ENCODE measurements at regions of chr9 and their contacts with region 1.

Region 1: DNA sequence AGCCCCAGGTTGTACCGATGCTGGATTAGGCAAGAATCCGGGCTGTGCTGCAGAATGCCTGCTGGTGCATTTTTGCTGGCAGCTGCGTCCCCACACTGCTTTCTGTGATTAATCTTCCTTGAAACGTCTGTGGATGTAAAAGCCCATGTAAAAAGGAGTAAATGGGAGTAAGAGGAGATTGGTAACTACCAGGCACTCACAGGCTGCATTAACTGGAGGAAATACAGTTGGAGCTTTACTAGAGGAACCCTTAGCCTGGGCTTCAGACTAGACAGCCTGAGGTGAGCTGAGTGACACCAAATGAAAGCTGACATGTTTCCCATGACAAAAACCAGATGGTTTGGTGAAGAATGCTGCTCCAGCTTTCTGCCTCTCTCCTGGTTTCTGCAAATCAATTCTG is 190.4 kb upstream of the GAS1 start:
- DNase-seq: no peak
- H3K4me3 Mint-ChIP-seq: no peak overlapping the region
- H3K27ac Mint-ChIP-seq: no peak overlapping the region
- H3K4me1 Mint-ChIP-seq: peaks cover 6% of the 10 kb centered on the region
- H3K27me3 Mint-ChIP-seq: no peaks in the 10 kb centered on the region
- CTCF ChIP-seq: no peak

Region 2: GRCh38 chr9:87069690-87070089 is 68.0 kb before region 1 on chr9:
- CTCF ChIA-PET with region 1: no interaction called
- POLR2A ChIA-PET with region 1: no interaction called
- intact Hi-C with region 1: no loop called
- DNase-seq: peak; percentile 14
- H3K4me3 Mint-ChIP-seq: no peak overlapping the region
- H3K27ac Mint-ChIP-seq: peak overlapping the region; percentile 81
- H3K4me1 Mint-ChIP-seq: peaks cover 33% of the 10 kb centered on the region
- H3K27me3 Mint-ChIP-seq: no peaks in the 10 kb centered on the region
- CTCF ChIP-seq: no peak

Region 3: DNA sequence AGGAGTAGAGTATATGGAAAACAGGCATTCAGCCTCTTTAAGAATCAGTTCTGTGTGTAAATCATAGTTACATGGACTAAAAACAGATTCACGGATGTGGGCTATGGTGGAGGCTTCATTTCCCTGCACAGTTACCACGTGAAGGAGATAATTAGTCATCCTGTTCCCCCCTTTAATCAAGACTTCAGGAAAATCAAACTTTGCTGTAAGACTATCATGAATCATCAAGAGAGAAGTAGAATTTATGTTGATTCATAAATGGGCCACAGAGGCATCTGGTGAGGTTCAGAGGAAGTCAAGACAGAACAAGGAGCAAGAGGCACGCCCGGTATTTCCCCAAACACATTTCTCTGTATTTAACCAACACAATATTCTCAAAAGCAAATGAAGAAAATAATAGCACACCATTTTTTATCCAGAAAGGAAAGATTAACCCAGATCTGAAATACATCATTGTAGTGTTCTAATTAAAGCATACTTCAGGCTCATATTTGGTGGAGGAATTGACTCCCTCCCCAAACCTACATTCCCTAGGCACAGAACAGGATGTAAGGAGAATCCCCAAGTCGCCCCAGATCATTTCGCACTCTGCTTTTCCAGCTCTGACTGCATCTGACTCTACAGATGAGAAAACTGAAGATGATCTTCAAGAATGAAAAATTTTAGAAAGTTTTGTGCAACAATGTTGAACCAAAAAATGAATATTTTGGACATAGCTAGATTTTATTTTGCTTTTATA is 14.6 kb before region 1 on chr9:
- CTCF ChIA-PET with region 1: no interaction called
- POLR2A ChIA-PET with region 1: interaction called, 11 read pairs
- intact Hi-C with region 1: no loop called
- DNase-seq: peak; percentile 66
- H3K4me3 Mint-ChIP-seq: no peak overlapping the region
- H3K27ac Mint-ChIP-seq: peak overlapping the region; percentile 29
- H3K4me1 Mint-ChIP-seq: peaks cover 32% of the 10 kb centered on the region
- H3K27me3 Mint-ChIP-seq: no peaks in the 10 kb centered on the region
- CTCF ChIP-seq: no peak

Region 4: DNA sequence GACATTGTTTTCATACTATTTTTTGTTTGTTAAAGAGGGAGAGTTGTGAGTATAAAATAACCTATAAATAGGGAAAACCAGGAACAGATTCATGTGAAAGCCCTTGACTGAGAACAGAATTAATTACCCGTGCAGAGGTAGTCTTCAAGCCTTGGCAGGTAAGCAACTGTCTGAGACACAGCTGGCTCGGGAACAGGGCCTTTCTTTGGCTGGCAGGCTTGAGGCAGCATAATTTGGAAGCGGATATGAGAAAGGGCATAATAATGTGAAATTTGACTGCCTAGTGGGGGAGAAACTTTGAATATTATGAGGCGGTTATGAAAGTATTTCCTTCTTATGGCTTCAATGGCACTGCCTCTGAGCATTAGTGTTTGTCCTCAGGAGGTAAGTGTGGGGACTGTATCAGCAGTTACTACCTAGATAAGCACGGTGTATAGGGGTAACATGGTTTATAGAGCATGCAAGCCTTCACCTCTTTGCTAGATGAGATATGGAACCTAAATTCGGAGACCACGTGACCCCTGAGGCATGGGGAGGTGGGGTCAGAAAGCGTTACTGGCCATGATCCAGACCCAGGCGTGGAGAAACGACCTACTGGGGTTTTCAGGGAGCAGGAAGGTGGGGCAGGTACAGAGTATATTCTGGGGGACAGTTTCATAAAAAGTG is 19.8 kb after region 1 on chr9:
- CTCF ChIA-PET with region 1: no interaction called
- POLR2A ChIA-PET with region 1: no interaction called
- intact Hi-C with region 1: no loop called
- DNase-seq: no peak
- H3K4me3 Mint-ChIP-seq: no peak overlapping the region
- H3K27ac Mint-ChIP-seq: no peak overlapping the region
- H3K4me1 Mint-ChIP-seq: peaks cover 7% of the 10 kb centered on the region
- H3K27me3 Mint-ChIP-seq: no peaks in the 10 kb centered on the region
- CTCF ChIP-seq: no peak

Region 5: DNA sequence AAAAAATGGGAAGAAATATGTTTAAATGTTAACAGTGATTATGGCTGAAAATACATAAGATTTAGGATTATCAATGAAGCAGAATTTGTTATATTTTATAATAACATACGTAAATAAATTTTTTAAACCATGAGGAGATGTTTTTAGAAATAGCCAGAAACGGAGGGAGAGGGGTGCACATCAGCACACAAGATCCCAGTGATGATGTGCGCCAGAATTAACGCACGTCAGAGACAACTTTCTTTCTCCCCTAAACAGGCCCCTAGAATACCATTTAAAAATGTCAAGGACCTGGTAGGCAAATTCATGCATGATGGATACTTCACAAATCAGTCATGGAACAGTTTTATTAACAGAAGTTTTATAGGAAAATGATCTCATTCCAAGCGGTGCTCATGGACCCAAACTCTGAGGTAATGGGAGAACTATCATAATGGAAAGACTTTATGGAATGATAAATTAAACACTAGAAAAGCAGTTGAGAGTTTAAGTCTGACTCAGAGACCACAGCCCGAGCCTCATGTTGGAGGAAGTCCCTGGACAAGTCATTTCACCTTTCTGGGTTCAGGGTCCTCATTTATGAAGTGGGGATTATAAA is 68.4 kb after region 1 on chr9:
- CTCF ChIA-PET with region 1: no interaction called
- POLR2A ChIA-PET with region 1: no interaction called
- intact Hi-C with region 1: no loop called
- DNase-seq: no peak
- H3K4me3 Mint-ChIP-seq: no peak overlapping the region
- H3K27ac Mint-ChIP-seq: no peak overlapping the region
- H3K4me1 Mint-ChIP-seq: peaks cover 10% of the 10 kb centered on the region
- H3K27me3 Mint-ChIP-seq: no peaks in the 10 kb centered on the region
- CTCF ChIP-seq: no peak

Region 6: GRCh38 chr9:87824216-87824875 is 686.6 kb after region 1 on chr9:
- CTCF ChIA-PET with region 1: no interaction called
- POLR2A ChIA-PET with region 1: no interaction called
- intact Hi-C with region 1: no loop called
- DNase-seq: no peak
- H3K4me3 Mint-ChIP-seq: no peak overlapping the region
- H3K27ac Mint-ChIP-seq: no peak overlapping the region
- H3K4me1 Mint-ChIP-seq: no peaks in the 10 kb centered on the region
- H3K27me3 Mint-ChIP-seq: no peaks in the 10 kb centered on the region
- CTCF ChIP-seq: no peak